Caco-2 (cell line): ENCODE measurements at regions of chr18 and their contacts with region 1.

Region 1: GRCh38 chr18:47215554-47216138 is 35.8 kb downstream of the SKOR2 start:
- DNase-seq: peak in 1 of 2 experiments; percentile 15
- H3K4me3 ChIP-seq: no peak overlapping the region
- H3K4me3 Mint-ChIP-seq: no peak overlapping the region
- H3K27ac Mint-ChIP-seq: no peak overlapping the region
- H3K4me1 ChIP-seq: no peaks in the 10 kb centered on the region
- H3K4me1 Mint-ChIP-seq: no peaks in the 10 kb centered on the region
- H3K27me3 ChIP-seq: no peaks in the 10 kb centered on the region
- H3K27me3 Mint-ChIP-seq: peaks cover 3% of the 10 kb centered on the region
- CTCF ChIP-seq: peak; percentile 26 to 27

Region 2: DNA sequence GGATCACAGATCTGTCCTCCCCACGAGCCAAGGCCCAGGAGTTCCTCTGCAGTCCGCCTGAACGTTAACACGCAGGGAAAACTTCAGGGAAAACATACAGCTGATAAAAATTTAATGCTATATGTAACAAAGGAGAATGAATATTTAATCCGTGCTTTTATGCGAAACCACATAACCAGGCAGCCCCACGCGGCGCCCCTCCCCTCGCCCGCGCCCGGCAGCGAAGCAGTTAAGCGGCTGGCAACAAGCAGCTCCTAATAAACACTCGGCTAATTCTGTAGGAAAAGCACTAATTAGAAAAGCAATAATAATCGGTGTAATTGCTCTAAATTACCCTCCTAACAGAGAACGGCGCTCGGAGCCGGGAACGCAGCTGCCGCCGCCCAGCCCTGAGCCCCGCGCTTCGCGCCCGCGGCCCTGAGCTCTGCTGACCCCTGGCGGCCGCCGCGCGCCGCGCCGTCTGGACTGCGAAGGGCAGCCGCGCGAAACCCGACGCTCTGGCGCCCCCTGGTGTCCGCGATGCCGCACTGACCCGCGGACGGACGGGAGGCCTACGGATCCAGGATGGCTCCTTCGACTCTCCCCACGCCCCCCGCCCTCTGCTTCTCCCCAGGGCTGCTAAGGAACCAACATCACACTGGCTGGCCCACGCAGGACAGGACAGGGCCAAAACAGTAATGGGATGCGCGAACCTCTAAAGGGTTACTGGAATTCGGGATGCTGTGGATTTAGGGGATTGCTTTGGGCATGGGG is 533.4 kb after region 1 on chr18:
- CTCF ChIA-PET with region 1: no interaction called
- POLR2A ChIA-PET with region 1: no interaction called
- intact Hi-C with region 1: loop called (anchors 1 kb)
- DNase-seq: peak; percentile 37 to 72
- H3K4me3 ChIP-seq: no peak overlapping the region
- H3K4me3 Mint-ChIP-seq: peak overlapping the region; percentile 42
- H3K27ac Mint-ChIP-seq: peak overlapping the region; percentile 57
- H3K4me1 ChIP-seq: no peaks in the 10 kb centered on the region
- H3K4me1 Mint-ChIP-seq: no peaks in the 10 kb centered on the region
- H3K27me3 ChIP-seq: no peaks in the 10 kb centered on the region
- H3K27me3 Mint-ChIP-seq: peaks cover 10% of the 10 kb centered on the region
- CTCF ChIP-seq: peak; percentile 66 to 84